ENCODE measurements at regions of chr10 and their contacts with region 1.

Region 1: GRCh38 chr10:102009801-102010425 is 46.1 kb downstream of the ARMH3 start:
- DNase-seq: peak in 3 of 10 donors; percentile 34 to 60 (median 58)
- H3K4me3 ChIP-seq: no peak overlapping the region
- H3K27ac ChIP-seq: peak overlapping the region in 1 of 59 donors; percentile 13
- H3K27me3 ChIP-seq: no peaks in the 10 kb centered on the region
- CTCF ChIP-seq: peak; percentile 77 to 95 (median 88)

Region 2: DNA sequence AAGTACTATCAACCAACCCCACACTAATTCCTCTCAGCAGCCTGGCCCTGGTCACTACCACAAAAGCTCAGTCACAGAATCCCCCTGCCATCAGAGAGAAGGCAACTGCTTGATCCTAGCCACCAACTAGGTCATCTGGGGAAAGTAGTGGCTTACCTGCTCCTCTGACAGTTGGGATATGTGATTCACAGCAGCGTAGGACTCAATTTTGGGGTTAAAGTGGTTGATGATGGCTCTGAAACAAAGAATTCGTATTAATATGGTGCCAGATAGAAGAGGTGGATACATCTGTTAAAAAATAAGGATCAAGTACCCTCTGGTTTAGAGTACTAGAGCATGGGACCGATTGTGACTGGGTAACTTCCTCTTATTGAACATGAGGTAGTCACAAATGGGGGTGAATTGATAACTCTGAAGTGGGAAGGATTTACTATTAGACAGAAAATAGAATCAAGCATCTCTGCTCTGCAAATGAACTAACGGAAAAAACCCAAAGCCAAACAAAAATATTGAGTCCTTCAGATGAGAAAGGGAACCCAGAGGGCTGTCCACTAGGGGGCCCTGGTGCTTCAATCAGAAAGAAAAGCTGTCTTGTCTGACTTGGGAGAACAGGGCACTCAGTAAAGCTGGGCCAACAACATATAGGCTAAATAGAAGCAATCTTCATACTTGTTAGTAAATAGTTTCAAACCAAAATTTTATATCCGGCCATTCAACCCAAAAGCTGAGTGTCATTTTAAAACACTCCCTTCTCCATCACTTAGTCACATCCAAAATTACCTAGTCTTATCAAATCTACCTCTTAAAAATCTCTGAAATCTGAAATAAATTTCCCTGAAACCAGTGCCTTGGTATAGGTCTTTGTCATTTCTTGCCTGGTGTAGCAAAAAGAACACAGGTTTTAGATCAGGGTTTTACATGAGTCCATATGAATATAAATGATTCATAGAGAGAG is 120.4 kb before region 1 on chr10:
- intact Hi-C with region 1: loop called (anchors 2 kb)
- DNase-seq: peak; percentile 69 to 95 (median 85)
- H3K4me3 ChIP-seq: no peak overlapping the region
- H3K27ac ChIP-seq: peak overlapping the region in 49 of 59 donors; percentile 0 to 78 (median 50)
- H3K27me3 ChIP-seq: no peaks in the 10 kb centered on the region
- CTCF ChIP-seq: peak; percentile 67 to 91 (median 85)

Region 3: DNA sequence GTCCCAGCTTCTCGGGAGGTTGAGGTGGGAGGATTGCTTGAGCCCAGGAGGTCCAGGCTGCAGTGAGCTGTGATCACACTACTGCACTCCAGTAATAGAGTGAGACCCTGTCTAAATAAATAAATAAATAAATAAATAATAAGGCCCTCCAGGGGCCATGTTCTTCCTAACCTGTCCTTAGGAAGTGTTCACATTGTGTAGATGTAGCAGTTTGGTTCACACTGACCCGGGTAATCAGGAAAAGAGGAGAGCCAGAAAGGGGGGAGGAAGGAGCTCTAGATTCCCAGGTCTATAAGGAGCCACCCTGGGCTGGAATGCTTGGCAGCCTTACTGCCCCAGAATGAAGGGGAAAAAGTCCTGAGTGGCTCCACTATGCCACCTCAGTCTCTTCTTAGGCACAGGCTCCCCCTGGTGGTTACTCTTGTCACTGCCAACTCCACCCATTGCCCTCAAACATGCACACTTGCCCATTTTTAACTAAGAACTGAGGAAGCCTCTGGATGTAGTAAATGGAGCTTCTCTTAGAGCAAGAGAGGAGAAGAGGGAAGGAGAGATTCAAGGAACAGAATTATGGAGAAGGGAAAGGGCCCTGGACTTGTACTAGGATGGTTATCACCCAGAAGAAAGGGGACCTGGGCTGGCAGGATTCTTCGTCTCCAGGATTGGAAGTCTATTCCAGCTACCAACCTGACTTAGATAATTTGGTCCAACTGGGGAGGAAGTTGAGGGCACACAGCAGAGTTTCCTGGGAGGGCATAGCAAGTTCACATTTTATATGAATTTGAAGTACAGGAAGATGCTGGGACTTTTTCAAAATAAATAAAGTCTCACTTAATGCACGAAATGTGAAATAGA is 63.0 kb after region 1 on chr10:
- intact Hi-C with region 1: loop called in 1 of 2 experiments (anchors 1 kb)
- DNase-seq: peak; percentile 71 to 91 (median 82)
- H3K4me3 ChIP-seq: no peak overlapping the region
- H3K27ac ChIP-seq: no peak overlapping the region
- H3K27me3 ChIP-seq: no peaks in the 10 kb centered on the region
- CTCF ChIP-seq: peak; percentile 78 to 97 (median 93)

Region 4: GRCh38 chr10:102225646-102226541 is 216.0 kb after region 1 on chr10 and contains the start of gene ELOVL3:
- intact Hi-C with region 1: no loop called
- DNase-seq: peak; percentile 79 to 95 (median 92)
- H3K4me3 ChIP-seq: peak within 1 kb of the TSS; percentile 23 to 71 (median 51)
- H3K27ac ChIP-seq: peak within 1 kb of the TSS in 31 of 59 donors; percentile 1 to 74 (median 45)
- H3K27me3 ChIP-seq: peaks cover 0 to 32% (median 10%) of the 10 kb centered on the region in 45 donors
- CTCF ChIP-seq: peak in 35 of 56 donors; percentile 5 to 58 (median 25)
- total RNA-seq, gene ELOVL3: 0.22 to 1.8 (median 0.62) TPM in 77 of 120 experiments, not detected in the others

Measured in dorsolateral prefrontal cortex (tissue), 120 donors.